ENCODE measurements at regions of chrX and their contacts with region 1.

Region 1: GRCh38 chrX:37846934-37847732 is at the start of gene DYNLT3:
- DNase-seq: peak; percentile 51 to 80 (median 71)
- ATAC-seq: peak; percentile 99
- H3K4me3 ChIP-seq: peak within 1 kb of the TSS; percentile 84
- H3K4me3 Mint-ChIP-seq: peak within 1 kb of the TSS; percentile 68 to 93 (median 88)
- H3K27ac ChIP-seq: peak within 1 kb of the TSS; percentile 96
- H3K27ac Mint-ChIP-seq: peak within 1 kb of the TSS; percentile 89 to 98 (median 94)
- H3K4me1 ChIP-seq: peaks cover 4 to 8% of the 10 kb centered on the region in 2 donors
- H3K4me1 Mint-ChIP-seq: peaks cover 5 to 44% (median 31%) of the 10 kb centered on the region in 7 donors
- H3K27me3 ChIP-seq: no peaks in the 10 kb centered on the region
- H3K27me3 Mint-ChIP-seq: no peaks in the 10 kb centered on the region
- total RNA-seq, gene DYNLT3: 13.8 to 39.3 (median 25.8) TPM

Region 2: GRCh38 chrX:37787423-37787869 is 59.7 kb before region 1 on chrX:
- CTCF ChIA-PET with region 1: interaction called, 3 read pairs
- POLR2A ChIA-PET with region 1: interaction called, 3 read pairs
- intact Hi-C with region 1: loop called in 1 of 2 experiments (anchors 5 kb)
- DNase-seq: no peak
- ATAC-seq: peak; percentile 62
- H3K4me3 ChIP-seq: no peak overlapping the region
- H3K4me3 Mint-ChIP-seq: peak overlapping the region in 6 of 10 donors; percentile 1 to 61 (median 51)
- H3K27ac ChIP-seq: no peak overlapping the region
- H3K27ac Mint-ChIP-seq: peak overlapping the region in 7 of 9 donors; percentile 3 to 86 (median 48)
- H3K4me1 ChIP-seq: peaks cover 11 to 20% of the 10 kb centered on the region in 2 donors
- H3K4me1 Mint-ChIP-seq: peaks cover 18 to 52% (median 38%) of the 10 kb centered on the region in 7 donors
- H3K27me3 ChIP-seq: no peaks in the 10 kb centered on the region
- H3K27me3 Mint-ChIP-seq: no peaks in the 10 kb centered on the region